ENCODE measurements at regions of chr16 and their contacts with region 1.

Region 1: DNA sequence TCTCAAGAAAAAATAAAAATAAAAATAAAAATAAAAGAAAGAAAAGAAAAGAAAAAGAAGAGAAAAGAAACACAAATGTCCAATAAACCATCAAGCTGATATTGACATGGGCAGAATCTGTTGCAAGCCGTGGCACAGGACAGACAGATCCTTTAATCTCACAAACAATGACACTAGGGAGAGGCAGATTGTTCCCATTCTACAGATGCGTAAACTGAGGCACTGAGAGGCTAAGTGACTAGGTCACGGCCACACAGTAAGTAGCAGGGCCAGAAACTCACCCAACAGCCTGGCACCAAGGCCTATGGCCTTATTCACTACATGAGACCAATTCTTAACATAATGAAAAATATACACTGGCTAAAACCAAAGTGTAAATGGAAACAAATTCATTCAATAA is 28.3 kb upstream of the ZFP90 start:
- DNase-seq: no peak
- H3K4me3 ChIP-seq: no peak overlapping the region
- H3K27ac ChIP-seq: no peak overlapping the region
- H3K4me1 ChIP-seq: no peaks in the 10 kb centered on the region
- CTCF ChIP-seq: no peak

Region 2: GRCh38 chr16:68396481-68396880 is 114.3 kb before region 1 on chr16:
- CTCF ChIA-PET with region 1: no interaction called
- POLR2A ChIA-PET with region 1: no interaction called
- intact Hi-C with region 1: loop called (anchors 2 kb)
- DNase-seq: peak; percentile 63
- H3K4me3 ChIP-seq: no peak overlapping the region
- H3K27ac ChIP-seq: no peak overlapping the region
- H3K4me1 ChIP-seq: no peaks in the 10 kb centered on the region
- CTCF ChIP-seq: peak; percentile 78

Region 3: GRCh38 chr16:68605746-68606145 is 95.0 kb after region 1 on chr16:
- CTCF ChIA-PET with region 1: no interaction called
- POLR2A ChIA-PET with region 1: no interaction called
- intact Hi-C with region 1: no loop called
- DNase-seq: no peak
- H3K4me3 ChIP-seq: no peak overlapping the region
- H3K27ac ChIP-seq: no peak overlapping the region
- H3K4me1 ChIP-seq: no peaks in the 10 kb centered on the region
- CTCF ChIP-seq: no peak